ENCODE measurements at regions of chr12 and their contacts with region 1.

Region 1: GRCh38 chr12:17763366-17763765 is 326.6 kb downstream of the RERGL start:
- DNase-seq: no peak
- H3K4me3 ChIP-seq: no peak overlapping the region
- H3K27ac ChIP-seq: no peak overlapping the region
- H3K4me1 ChIP-seq: no peaks in the 10 kb centered on the region
- H3K27me3 ChIP-seq: no peaks in the 10 kb centered on the region
- CTCF ChIP-seq: no peak

Region 2: DNA sequence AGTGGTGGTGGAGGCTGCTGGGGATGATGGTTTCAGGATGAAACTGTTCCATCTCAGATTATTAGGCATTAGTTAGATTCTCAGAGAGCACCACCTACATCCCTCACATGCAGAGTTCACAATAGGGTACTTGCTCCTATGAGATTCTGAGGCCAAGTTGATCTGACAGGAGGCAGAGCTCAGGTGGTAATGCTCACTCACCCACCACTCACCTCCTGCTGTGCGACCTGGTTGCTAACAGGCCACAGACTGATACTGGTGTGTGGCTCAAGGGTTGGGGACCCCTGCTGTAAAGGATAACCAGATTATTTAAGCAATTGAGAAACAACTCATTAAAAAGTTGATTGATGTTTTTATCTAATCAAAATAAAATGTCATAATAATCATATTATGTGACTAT is 78.1 kb after region 1 on chr12:
- CTCF ChIA-PET with region 1: no interaction called
- dilution Hi-C with region 1: no loop called
- in situ Hi-C with region 1: loop called in 1 of 2 experiments (anchors 10 kb)
- intact Hi-C with region 1: no loop called
- DNase-seq: no peak
- H3K4me3 ChIP-seq: no peak overlapping the region
- H3K27ac ChIP-seq: no peak overlapping the region
- H3K4me1 ChIP-seq: no peaks in the 10 kb centered on the region
- H3K27me3 ChIP-seq: no peaks in the 10 kb centered on the region
- CTCF ChIP-seq: no peak

Region 3: DNA sequence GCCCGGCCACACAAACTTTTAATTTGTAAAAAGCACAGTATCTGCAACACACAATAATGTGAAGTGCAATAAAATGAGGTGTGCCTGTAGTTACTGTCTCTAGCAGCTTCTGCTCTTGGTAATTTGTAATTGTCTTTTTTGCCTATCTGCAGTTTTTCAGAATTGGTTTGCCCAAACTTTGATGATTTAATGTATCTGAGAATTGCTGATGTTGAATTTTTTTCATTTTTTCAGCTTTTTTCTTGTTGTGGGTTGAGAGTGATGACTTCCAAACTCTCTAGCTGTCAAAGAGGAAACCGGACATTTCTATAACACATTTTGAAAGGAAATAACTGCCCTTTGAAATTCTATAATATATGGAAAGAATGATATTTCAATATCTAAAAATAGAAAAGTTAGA is 89.7 kb after region 1 on chr12:
- CTCF ChIA-PET with region 1: no interaction called
- dilution Hi-C with region 1: no loop called
- in situ Hi-C with region 1: loop called (anchors 5 to 10 kb)
- intact Hi-C with region 1: loop called (anchors 5 kb)
- DNase-seq: no peak
- H3K4me3 ChIP-seq: no peak overlapping the region
- H3K27ac ChIP-seq: no peak overlapping the region
- H3K4me1 ChIP-seq: no peaks in the 10 kb centered on the region
- H3K27me3 ChIP-seq: no peaks in the 10 kb centered on the region
- CTCF ChIP-seq: no peak